AG04450 (cell line): ENCODE measurements at regions of chr1 and their contacts with region 1.

Region 1: DNA sequence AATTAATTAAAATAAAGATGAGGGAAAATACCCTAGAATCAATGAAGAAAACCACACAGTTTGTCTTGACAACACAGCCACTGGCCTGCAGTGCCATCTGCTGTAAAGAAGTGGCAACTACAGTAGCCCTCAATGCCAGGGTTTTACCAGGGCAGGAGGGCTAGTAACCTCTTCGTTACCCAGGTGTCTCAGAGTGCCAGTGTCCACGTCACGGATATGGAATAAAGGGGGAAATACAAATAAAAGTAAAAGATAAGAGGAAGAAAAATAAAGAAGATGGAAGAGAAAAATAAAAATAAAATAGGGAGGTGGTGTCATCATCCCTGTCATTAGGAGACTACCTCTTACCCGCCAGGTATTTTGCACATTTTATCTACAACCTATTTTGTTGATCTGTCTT is 14.2 kb upstream of the SLC44A3 start:
- DNase-seq: no peak
- H3K4me3 ChIP-seq: no peak overlapping the region
- H3K27ac ChIP-seq: no peak overlapping the region
- H3K27me3 ChIP-seq: no peaks in the 10 kb centered on the region
- CTCF ChIP-seq: peak; percentile 95

Region 2: DNA sequence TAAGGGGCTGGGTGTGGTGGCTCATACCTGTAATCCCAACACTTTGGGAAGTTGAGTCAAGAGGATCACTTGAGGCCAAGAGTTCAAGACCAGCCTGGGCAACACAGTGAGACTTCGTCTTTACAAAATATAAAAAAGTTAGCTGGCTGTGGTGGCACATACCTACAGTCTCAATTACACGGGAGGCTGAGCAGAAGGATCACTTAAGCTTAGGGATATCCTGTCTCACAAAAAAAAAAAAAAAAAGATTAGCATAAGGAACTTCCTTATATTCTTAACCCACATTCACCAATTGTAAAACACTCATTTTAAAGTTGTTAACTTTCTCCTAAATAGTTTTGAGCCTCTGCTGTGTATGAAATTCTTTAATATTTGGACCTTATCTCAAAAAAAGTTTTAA is 334.6 kb before region 1 on chr1:
- CTCF ChIA-PET with region 1: interaction called, 16 read pairs
- POLR2A ChIA-PET with region 1: no interaction called
- DNase-seq: no peak
- H3K4me3 ChIP-seq: no peak overlapping the region
- H3K27ac ChIP-seq: no peak overlapping the region
- H3K27me3 ChIP-seq: no peaks in the 10 kb centered on the region
- CTCF ChIP-seq: no peak

Region 3: GRCh38 chr1:94486990-94487389 is 318.9 kb before region 1 on chr1:
- CTCF ChIA-PET with region 1: interaction called, 101 read pairs
- POLR2A ChIA-PET with region 1: no interaction called
- DNase-seq: no peak
- H3K4me3 ChIP-seq: no peak overlapping the region
- H3K27ac ChIP-seq: no peak overlapping the region
- H3K27me3 ChIP-seq: no peaks in the 10 kb centered on the region
- CTCF ChIP-seq: no peak

Region 4: DNA sequence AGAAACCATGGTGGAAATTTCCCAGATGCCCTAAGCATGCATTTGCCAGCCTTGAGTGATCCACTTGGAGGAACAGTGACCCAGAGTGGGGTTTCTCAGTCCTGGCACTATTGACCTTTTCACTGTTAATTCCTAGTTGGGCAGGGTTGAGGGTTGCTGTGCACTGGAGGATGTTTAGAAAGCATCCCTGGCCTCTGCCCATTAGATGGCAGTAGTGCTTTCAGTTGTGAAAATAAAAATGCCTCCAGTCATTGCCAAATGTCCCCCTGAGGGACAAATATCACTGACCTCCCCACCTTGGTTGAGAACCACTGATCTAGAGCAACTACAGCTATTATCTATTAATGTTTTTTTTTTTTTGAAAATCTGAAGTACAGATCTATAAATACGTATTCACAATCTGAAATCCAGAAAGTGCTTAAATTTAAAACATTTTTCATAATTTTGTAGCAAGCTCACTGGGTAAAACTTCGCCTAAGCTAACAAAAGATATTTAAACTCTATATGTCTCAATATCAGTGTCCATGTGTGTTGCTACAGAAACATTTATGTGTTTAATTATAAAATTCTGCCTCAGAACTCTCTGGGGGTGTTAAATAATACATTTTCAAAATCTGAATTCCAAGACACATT is 291.7 kb before region 1 on chr1:
- CTCF ChIA-PET with region 1: interaction called, 135 read pairs
- POLR2A ChIA-PET with region 1: no interaction called
- DNase-seq: no peak
- H3K4me3 ChIP-seq: no peak overlapping the region
- H3K27ac ChIP-seq: no peak overlapping the region
- H3K27me3 ChIP-seq: no peaks in the 10 kb centered on the region
- CTCF ChIP-seq: peak; percentile 81

Region 5: GRCh38 chr1:94527447-94528031 is 278.4 kb before region 1 on chr1:
- CTCF ChIA-PET with region 1: interaction called, 87 read pairs
- POLR2A ChIA-PET with region 1: interaction called, 6 read pairs
- DNase-seq: no peak
- H3K4me3 ChIP-seq: no peak overlapping the region
- H3K27ac ChIP-seq: no peak overlapping the region
- H3K27me3 ChIP-seq: no peaks in the 10 kb centered on the region
- CTCF ChIP-seq: no peak

Region 6: DNA sequence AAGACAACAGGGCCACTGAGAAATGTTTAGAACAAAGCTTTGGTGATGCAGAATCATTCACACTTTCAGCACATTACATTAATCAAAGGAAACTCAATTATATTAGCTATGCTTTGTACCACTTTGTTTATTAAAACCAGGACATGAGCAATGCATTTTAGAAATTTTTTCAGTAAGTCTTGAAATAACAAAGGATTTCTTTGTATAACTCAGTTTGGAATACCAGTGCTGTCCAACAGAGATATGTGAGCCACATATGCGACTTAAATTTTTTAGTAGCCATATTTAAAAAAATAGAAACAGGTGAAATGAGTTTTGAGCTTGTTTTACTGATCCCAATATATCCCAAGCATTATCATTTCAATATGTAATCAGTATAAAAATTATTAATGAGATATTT is 245.6 kb before region 1 on chr1:
- CTCF ChIA-PET with region 1: interaction called, 12 read pairs
- POLR2A ChIA-PET with region 1: no interaction called
- DNase-seq: no peak
- H3K4me3 ChIP-seq: no peak overlapping the region
- H3K27ac ChIP-seq: peak overlapping the region; percentile 70
- H3K27me3 ChIP-seq: no peaks in the 10 kb centered on the region
- CTCF ChIP-seq: peak; percentile 42